Mammary epithelial cell (primary cell): ENCODE measurements at regions of chr20 and their contacts with region 1.

Region 1: GRCh38 chr20:45229264-45230056 is 8.3 kb downstream of the SEMG2 start:
- DNase-seq: peak; percentile 47
- H3K4me3 ChIP-seq: no peak overlapping the region
- H3K27ac ChIP-seq: no peak overlapping the region
- H3K4me1 ChIP-seq: no peaks in the 10 kb centered on the region
- H3K27me3 ChIP-seq: peaks cover 3% of the 10 kb centered on the region
- CTCF ChIP-seq: peak; percentile 81 to 87

Region 2: GRCh38 chr20:44264287-44264686 is 965.2 kb before region 1 on chr20:
- CTCF ChIA-PET with region 1: no interaction called
- dilution Hi-C with region 1: no loop called
- in situ Hi-C with region 1: no loop called
- intact Hi-C with region 1: no loop called
- DNase-seq: peak; percentile 9
- H3K4me3 ChIP-seq: no peak overlapping the region
- H3K27ac ChIP-seq: no peak overlapping the region
- H3K4me1 ChIP-seq: no peaks in the 10 kb centered on the region
- H3K27me3 ChIP-seq: peaks cover 2% of the 10 kb centered on the region
- CTCF ChIP-seq: no peak

Region 3: GRCh38 chr20:44990425-44990824 is 239.0 kb before region 1 on chr20:
- CTCF ChIA-PET with region 1: no interaction called
- dilution Hi-C with region 1: no loop called
- in situ Hi-C with region 1: no loop called
- intact Hi-C with region 1: no loop called
- DNase-seq: no peak
- H3K4me3 ChIP-seq: no peak overlapping the region
- H3K27ac ChIP-seq: no peak overlapping the region
- H3K4me1 ChIP-seq: peaks cover 6% of the 10 kb centered on the region
- H3K27me3 ChIP-seq: no peaks in the 10 kb centered on the region
- CTCF ChIP-seq: no peak

Region 4: DNA sequence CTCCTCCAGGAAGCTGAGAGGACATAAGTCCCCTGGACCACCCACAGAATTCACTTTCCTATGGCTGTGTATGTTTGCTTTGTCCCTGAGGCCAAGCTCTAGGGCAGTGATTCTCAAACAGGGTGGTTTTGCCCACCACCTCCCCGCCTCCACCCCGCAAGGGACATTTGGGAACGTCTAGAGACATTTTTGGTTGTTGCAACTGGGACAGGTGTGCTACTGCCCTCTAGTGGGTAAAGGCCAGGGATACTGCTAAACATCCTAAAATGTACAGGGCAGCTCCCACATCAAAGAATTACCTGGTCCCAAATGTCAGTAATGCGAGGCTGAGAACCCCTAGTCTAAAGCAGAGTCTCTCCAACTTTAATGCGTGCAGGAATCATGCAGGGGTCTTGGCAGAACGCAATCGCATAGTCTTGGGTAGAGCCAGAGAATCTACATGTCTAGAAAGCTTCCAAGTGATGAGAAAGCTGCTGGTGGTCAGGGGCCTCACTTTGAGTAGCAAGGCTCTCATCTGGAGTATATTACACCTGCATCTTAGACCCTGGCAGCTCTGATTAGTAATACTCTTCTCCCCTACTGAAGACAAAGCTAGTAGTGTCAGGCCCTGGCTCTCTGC is 133.6 kb before region 1 on chr20:
- CTCF ChIA-PET with region 1: no interaction called
- dilution Hi-C with region 1: no loop called
- in situ Hi-C with region 1: no loop called
- intact Hi-C with region 1: loop called (anchors 1 kb)
- DNase-seq: peak; percentile 44
- H3K4me3 ChIP-seq: no peak overlapping the region
- H3K27ac ChIP-seq: no peak overlapping the region
- H3K4me1 ChIP-seq: peaks cover 10% of the 10 kb centered on the region
- H3K27me3 ChIP-seq: no peaks in the 10 kb centered on the region
- CTCF ChIP-seq: peak; percentile 65 to 84

Region 5: GRCh38 chr20:45138561-45139300 is 90.7 kb before region 1 on chr20:
- CTCF ChIA-PET with region 1: no interaction called
- dilution Hi-C with region 1: no loop called
- in situ Hi-C with region 1: no loop called
- intact Hi-C with region 1: loop called (anchors 1 kb)
- DNase-seq: peak; percentile 56
- H3K4me3 ChIP-seq: no peak overlapping the region
- H3K27ac ChIP-seq: no peak overlapping the region
- H3K4me1 ChIP-seq: peaks cover 3% of the 10 kb centered on the region
- H3K27me3 ChIP-seq: no peaks in the 10 kb centered on the region
- CTCF ChIP-seq: peak; percentile 88 to 91